H1 (cell line): ENCODE measurements at regions of chr2 and their contacts with region 1.

Region 1: GRCh38 chr2:160109936-160110673 is 47.7 kb upstream of the PLA2R1 start:
- DNase-seq: no peak
- H3K4me3 ChIP-seq: no peak overlapping the region
- H3K27ac ChIP-seq: no peak overlapping the region
- H3K4me1 ChIP-seq: peaks cover 0 to 2% (median 0%) of the 10 kb centered on the region in 4 experiments; a peak in 1 of 7 replicates
- H3K27me3 ChIP-seq: no peaks in the 10 kb centered on the region
- CTCF ChIP-seq: peak; percentile 54 to 82 (median 74)
- EP300 ChIP-seq: no peak
- POLR2A ChIP-seq: no peak
- RAD21 ChIP-seq: peak; percentile 94 to 95

Region 2: DNA sequence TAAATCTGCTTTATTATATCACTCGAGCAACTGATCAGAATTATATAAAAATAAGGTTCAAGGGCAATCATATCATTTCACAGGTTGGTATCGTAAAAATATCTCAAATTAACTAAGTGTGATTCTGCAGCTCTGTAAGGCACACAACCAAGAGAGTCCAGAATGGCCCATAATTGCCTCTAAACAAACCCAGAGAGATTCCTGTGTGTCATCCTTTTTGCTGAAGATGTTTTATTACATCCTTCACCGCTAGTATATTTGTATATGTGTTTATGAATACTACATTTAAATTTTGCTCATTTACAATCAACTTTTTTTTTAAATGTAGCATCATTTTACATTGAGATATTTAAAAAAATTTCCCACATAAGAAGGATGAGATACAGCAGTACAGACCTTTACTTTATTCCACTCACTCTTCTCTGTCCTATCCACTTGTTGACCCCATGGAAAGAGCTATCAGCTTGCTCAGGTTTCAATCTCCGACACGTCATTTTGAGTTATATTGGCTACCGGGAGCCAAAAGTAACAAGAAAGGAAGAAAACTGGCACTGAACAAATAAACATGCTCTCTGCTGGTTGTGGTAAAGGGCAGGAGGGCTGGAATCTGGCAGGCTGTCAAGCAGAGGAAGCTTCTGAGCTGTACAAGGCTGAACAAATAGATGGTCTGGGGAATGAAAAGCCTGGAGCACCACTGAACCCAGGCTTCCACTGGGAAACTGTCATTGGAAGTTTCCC is 70.8 kb before region 1 on chr2:
- CTCF ChIA-PET with region 1: no interaction called
- POLR2A ChIA-PET with region 1: no interaction called
- DNase-seq: no peak
- H3K4me3 ChIP-seq: no peak overlapping the region
- H3K27ac ChIP-seq: no peak overlapping the region
- H3K4me1 ChIP-seq: peaks cover 0 to 8% (median 2%) of the 10 kb centered on the region in 4 experiments; a peak in 5 of 7 replicates
- H3K27me3 ChIP-seq: no peaks in the 10 kb centered on the region
- CTCF ChIP-seq: no peak
- EP300 ChIP-seq: no peak
- POLR2A ChIP-seq: no peak
- RAD21 ChIP-seq: no peak

Region 3: GRCh38 chr2:160096409-160096808 is 13.7 kb before region 1 on chr2:
- CTCF ChIA-PET with region 1: interaction called, 24 read pairs
- POLR2A ChIA-PET with region 1: no interaction called
- DNase-seq: no peak
- H3K4me3 ChIP-seq: no peak overlapping the region
- H3K27ac ChIP-seq: no peak overlapping the region
- H3K4me1 ChIP-seq: no peaks in the 10 kb centered on the region
- H3K27me3 ChIP-seq: no peaks in the 10 kb centered on the region
- CTCF ChIP-seq: no peak
- EP300 ChIP-seq: no peak
- POLR2A ChIP-seq: no peak
- RAD21 ChIP-seq: no peak

Region 4: DNA sequence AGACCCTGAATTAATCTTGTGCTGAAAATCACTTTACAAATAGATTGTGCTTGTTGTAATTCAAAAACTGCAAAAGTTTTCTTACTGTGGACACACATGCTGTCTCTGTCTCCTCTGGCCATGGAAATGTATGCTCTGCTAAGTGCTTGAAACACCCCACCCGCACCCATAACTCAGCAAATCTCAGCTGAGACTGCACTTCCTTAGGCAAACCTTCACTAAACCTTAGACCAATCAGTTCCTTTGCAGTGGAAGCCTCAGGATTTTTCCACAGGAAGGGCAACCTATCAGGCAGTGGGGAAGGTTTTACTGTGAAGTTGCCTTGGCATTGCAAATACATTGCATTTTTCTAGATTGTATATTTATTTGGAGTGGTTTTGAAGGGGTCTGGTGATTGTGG is 14.5 kb after region 1 on chr2:
- CTCF ChIA-PET with region 1: interaction called, 18 read pairs
- POLR2A ChIA-PET with region 1: no interaction called
- DNase-seq: no peak
- H3K4me3 ChIP-seq: no peak overlapping the region
- H3K27ac ChIP-seq: no peak overlapping the region
- H3K4me1 ChIP-seq: no peaks in the 10 kb centered on the region
- H3K27me3 ChIP-seq: no peaks in the 10 kb centered on the region
- CTCF ChIP-seq: no peak
- EP300 ChIP-seq: no peak
- POLR2A ChIP-seq: no peak
- RAD21 ChIP-seq: no peak

Region 5: GRCh38 chr2:160210599-160211138 is 100.6 kb after region 1 on chr2:
- CTCF ChIA-PET with region 1: interaction called, 43 read pairs
- POLR2A ChIA-PET with region 1: no interaction called
- DNase-seq: peak; percentile 36 to 89
- H3K4me3 ChIP-seq: no peak overlapping the region
- H3K27ac ChIP-seq: no peak overlapping the region
- H3K4me1 ChIP-seq: no peaks in the 10 kb centered on the region
- H3K27me3 ChIP-seq: no peaks in the 10 kb centered on the region
- CTCF ChIP-seq: peak; percentile 90 to 91 (median 91)
- EP300 ChIP-seq: no peak
- POLR2A ChIP-seq: no peak
- RAD21 ChIP-seq: peak; percentile 83 to 87

Region 6: DNA sequence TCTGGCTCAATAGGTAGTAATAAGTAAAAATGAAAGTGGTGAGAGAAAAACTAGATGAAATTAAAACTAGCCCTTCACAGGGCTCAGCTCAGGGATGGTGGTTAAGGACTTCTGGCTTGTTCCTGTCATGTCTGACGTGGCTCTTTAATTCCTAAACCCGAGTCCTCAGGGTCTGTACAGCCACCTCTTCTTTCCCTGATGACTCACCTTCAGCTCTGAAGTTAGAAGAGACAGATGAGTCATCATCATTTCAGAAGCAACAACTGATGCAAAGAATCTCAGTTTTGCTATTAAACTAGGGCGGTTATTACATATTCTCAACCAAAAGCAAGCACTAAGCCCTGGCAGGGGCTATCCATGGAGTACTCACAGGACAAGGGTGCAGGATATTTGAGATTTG is 114.0 kb after region 1 on chr2:
- CTCF ChIA-PET with region 1: interaction called, 10 read pairs
- POLR2A ChIA-PET with region 1: no interaction called
- DNase-seq: no peak
- H3K4me3 ChIP-seq: no peak overlapping the region
- H3K27ac ChIP-seq: no peak overlapping the region
- H3K4me1 ChIP-seq: peaks cover 0 to 5% (median 5%) of the 10 kb centered on the region in 4 experiments; a peak in 3 of 7 replicates
- H3K27me3 ChIP-seq: no peaks in the 10 kb centered on the region
- CTCF ChIP-seq: no peak
- EP300 ChIP-seq: no peak
- POLR2A ChIP-seq: no peak
- RAD21 ChIP-seq: no peak